ENCODE measurements at regions of chr6 and their contacts with region 1.

Region 1: GRCh38 chr6:90393232-90393884 is 96.7 kb upstream of the BACH2 start:
- DNase-seq: peak; percentile 92
- H3K4me3 Mint-ChIP-seq: no peak overlapping the region
- H3K27ac Mint-ChIP-seq: peak overlapping the region; percentile 70
- H3K4me1 Mint-ChIP-seq: peaks cover 78% of the 10 kb centered on the region
- H3K27me3 Mint-ChIP-seq: no peaks in the 10 kb centered on the region

Region 2: DNA sequence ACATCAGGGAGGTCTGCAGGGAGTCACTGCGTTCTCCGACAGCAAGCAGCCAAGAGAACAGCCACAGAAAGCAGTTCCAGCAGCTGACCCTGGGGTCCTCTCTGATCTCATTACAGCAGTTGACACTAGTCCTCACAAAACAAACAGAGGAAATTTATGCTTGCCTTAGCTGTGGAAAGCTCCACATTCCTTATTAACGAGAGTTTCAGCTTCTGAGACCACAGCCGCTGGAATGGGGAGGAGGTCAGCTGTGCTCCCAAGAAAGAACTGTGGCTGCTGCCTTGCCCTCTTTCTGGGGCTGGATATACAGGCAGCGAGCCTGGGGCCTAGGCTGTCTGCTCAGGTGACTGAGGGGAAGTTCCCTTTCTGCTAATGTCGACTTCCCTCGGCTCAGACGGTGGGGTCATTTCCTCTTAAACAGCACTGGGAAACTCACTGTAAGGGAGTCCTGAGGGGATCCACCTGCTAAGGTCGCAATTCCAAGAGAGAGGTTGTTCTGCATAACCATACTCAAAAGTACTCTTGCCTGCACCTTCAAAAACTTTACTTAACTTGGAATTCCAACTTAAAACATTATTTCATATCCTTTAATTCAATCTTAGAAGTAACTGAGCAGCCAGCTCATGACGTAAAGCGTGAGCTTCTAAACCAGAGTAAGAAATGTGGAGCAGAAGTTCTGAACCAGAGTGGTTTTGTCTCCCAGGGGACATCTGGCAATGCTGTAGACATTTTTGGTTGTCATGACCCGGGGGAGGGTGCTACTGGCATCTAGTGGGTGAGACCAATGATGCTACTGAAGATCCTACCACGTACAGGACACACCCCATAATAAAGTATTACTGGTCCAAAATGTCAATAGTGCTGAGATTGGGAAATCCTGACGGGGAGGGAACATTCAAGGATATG is 177.0 kb before region 1 on chr6:
- CTCF ChIA-PET with region 1: no interaction called
- intact Hi-C with region 1: loop called (anchors 1 kb)
- DNase-seq: peak; percentile 76
- H3K4me3 Mint-ChIP-seq: peak overlapping the region; percentile 14
- H3K27ac Mint-ChIP-seq: no peak overlapping the region
- H3K4me1 Mint-ChIP-seq: peaks cover 32% of the 10 kb centered on the region
- H3K27me3 Mint-ChIP-seq: no peaks in the 10 kb centered on the region

Region 3: GRCh38 chr6:90296346-90297114 is 96.8 kb before region 1 on chr6 and contains the start of gene BACH2:
- CTCF ChIA-PET with region 1: interaction called, 71 read pairs
- intact Hi-C with region 1: loop called (anchors 1 kb)
- DNase-seq: peak; percentile 99
- H3K4me3 Mint-ChIP-seq: peak within 1 kb of the TSS; percentile 86
- H3K27ac Mint-ChIP-seq: peak within 1 kb of the TSS; percentile 97
- H3K4me1 Mint-ChIP-seq: peaks cover 41% of the 10 kb centered on the region
- H3K27me3 Mint-ChIP-seq: peaks cover 2% of the 10 kb centered on the region
- total RNA-seq, gene BACH2: 75.1 to 77.9 TPM

Region 4: GRCh38 chr6:90403489-90404381 is 10.4 kb after region 1 on chr6:
- CTCF ChIA-PET with region 1: interaction called, 5 read pairs
- intact Hi-C with region 1: loop called (anchors 1 kb)
- DNase-seq: no peak
- H3K4me3 Mint-ChIP-seq: peak overlapping the region; percentile 57
- H3K27ac Mint-ChIP-seq: peak overlapping the region; percentile 87
- H3K4me1 Mint-ChIP-seq: peaks cover 86% of the 10 kb centered on the region
- H3K27me3 Mint-ChIP-seq: no peaks in the 10 kb centered on the region

Region 5: DNA sequence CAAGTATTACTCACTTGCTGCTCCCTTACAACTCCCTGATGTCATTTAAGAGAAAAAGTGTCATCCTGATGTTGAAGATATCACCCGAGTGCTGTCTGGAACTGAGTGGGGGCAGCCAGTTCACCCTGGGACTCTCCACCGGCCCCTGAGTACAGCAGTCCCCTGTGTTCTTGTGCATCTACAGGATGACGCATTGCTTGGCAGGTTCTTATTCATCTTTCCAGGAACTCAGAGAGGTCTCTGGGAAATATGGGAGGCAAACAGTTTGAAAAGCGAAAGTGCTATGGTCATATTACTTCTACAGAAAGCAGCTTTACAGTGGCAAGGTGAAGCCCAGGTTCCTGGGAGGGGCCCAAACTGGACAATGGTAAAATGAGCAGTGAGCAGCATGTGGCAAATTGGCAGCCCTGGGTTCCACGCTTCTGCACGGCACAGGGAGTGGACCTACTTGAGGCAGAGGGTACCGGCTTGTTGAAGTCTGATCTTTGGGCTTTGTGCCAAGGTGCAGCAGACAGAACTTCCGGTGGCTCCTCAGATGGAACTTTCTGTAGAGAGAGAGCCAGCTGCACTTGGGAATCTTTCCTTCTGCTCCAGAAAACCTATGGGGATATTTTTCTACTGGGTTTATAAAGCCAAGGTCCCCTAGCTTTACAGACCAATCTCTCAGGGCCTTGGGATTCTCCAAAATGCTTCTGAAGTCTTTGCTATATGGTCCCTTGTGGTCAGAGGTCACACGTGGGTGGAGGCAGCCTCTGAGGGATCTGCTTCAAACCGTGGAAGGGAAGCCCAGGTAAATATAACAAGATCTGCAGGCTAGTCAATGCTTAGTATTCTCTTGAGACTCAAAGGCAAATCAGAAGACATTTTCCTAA is 65.2 kb after region 1 on chr6:
- CTCF ChIA-PET with region 1: interaction called, 30 read pairs
- intact Hi-C with region 1: loop called (anchors 1 kb)
- DNase-seq: peak; percentile 95
- H3K4me3 Mint-ChIP-seq: peak overlapping the region; percentile 66
- H3K27ac Mint-ChIP-seq: peak overlapping the region; percentile 99
- H3K4me1 Mint-ChIP-seq: peaks cover 89% of the 10 kb centered on the region
- H3K27me3 Mint-ChIP-seq: no peaks in the 10 kb centered on the region

Region 6: DNA sequence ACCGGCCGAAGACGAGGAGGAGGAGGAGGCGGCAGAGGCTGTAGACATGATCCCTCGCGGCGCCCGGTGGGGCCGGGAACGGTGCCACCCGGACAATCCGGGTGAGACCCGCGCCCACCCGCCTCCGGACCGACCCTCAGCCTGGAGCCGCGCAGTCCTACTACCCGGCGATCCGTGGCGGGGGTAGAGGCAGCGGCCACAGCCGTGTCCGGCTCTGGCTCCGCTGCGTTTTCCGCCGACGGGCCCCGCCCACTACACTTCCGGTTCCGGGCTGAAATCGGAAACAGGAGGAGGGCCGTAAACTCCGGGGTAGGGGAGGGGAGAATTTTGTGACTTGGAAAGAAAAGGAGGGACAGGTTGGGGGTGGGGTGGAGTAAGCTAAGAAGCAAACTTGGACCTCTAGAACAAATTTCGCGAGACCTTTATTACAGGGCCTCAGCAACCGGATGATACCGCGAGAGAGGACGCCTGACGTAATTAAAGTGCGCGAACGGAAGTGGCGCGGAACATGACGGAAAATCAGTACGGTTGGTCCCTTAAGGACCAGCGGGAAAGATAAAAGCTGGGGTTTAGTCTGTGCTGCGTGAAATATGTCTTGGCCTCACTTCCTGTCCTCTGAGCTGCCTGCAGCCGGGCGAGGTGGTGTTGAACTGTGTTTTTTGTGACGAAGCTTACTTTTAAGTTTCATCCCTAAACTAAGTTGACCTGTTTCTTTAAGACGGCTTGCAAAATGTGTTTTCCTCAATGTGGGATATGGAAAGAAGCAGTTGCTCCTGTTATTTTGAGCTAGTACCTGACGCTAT is 193.7 kb after region 1 on chr6 and contains the start of gene MAP3K7:
- CTCF ChIA-PET with region 1: no interaction called
- intact Hi-C with region 1: loop called (anchors 5 kb)
- DNase-seq: peak; percentile 98
- H3K4me3 Mint-ChIP-seq: peak within 1 kb of the TSS; percentile 99
- H3K27ac Mint-ChIP-seq: peak within 1 kb of the TSS; percentile 99
- H3K4me1 Mint-ChIP-seq: peaks cover 40% of the 10 kb centered on the region
- H3K27me3 Mint-ChIP-seq: no peaks in the 10 kb centered on the region
- total RNA-seq, gene MAP3K7: 23.2 to 23.6 TPM

Region 7: DNA sequence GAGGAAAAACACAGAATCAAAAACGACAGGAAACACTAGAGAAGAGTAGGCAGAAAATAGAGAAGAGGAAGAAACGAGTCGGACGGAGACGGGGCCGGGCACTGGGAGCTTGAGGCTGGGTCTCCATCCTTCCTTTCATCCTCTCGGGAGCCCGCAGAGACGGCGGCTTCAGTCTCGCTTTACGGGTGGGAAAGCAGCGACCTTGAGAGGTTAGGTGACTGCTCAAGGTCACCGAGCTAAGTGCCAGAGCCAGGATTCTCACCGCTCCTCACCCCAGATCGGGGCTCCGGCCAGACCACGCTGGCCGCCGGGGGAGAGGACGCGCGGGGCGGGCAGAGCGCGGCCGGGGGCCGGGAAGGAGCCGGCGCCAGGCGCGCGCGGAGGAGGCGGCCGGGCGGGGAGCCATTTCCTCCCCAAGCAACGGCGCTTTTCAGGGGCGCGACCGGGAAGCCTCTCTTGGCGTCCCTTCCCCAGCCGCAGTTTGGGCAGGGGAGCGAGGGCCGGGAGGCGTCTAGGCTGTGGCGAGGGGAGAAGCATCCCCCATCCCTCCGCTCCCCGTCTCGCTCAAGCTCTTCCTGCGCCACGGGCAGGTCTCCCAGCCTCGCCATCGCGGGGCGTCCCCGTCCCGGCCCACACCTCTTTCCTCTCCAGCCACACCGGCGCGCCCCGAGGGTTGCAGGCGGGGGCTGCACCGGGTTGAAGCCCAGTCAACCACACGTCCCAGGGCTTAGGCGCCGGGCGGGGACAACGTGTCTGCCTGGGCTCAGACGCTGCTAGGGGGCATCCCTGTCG is 217.6 kb after region 1 on chr6:
- CTCF ChIA-PET with region 1: no interaction called
- intact Hi-C with region 1: no loop called
- DNase-seq: peak; percentile 54
- H3K4me3 Mint-ChIP-seq: peak overlapping the region; percentile 80
- H3K27ac Mint-ChIP-seq: no peak overlapping the region
- H3K4me1 Mint-ChIP-seq: peaks cover 11% of the 10 kb centered on the region
- H3K27me3 Mint-ChIP-seq: peaks cover 39% of the 10 kb centered on the region